ENCODE measurements at regions of chr7 and their contacts with region 1.

Region 1: GRCh38 chr7:30740424-30741181 is 11.3 kb upstream of the INMT start:
- DNase-seq: no peak
- H3K4me3 ChIP-seq: no peak overlapping the region
- H3K27me3 ChIP-seq: peaks cover 9% of the 10 kb centered on the region
- CTCF ChIP-seq: peak; percentile 99

Region 2: DNA sequence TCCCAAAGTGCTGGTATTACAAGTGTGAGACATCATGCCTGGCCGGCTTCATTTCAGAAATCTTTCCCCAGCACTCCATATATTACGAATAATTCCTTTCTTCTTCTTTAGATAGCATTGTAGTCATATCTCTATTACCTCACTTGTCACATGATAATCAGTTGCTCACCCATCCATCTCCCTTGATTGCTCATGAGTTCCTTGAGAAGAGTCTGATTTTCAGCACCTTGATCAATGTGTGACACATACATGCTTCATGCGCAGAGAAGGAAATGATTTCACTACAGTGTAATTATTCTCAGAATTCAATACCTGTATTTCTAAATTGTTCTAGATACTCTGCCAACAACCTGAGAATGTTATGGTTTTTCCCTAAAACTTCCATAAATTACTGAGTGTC is 209.3 kb before region 1 on chr7:
- CTCF ChIA-PET with region 1: no interaction called
- POLR2A ChIA-PET with region 1: no interaction called
- DNase-seq: no peak
- H3K4me3 ChIP-seq: no peak overlapping the region
- H3K27me3 ChIP-seq: no peaks in the 10 kb centered on the region
- CTCF ChIP-seq: no peak

Region 3: DNA sequence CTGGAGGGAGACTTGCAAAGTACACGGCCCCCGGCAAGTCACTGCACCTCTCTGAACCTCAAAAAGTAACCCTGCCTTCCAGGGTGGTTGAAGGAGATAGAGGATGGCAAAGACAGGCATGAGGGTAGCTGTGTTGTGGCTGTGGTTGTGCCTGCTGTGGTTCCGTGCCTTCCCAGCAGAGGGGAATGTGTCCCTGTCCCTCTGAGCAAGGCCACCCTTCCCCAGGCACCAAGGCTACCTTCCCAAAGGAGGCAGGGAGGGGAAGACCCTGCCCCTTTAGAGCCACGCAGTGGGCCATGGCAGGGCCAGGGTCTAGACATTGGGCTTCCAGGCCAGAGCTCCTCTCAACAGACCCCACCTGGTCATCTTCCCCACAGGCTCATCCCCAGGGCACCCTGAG is 77.2 kb before region 1 on chr7:
- CTCF ChIA-PET with region 1: interaction called, 10 read pairs
- POLR2A ChIA-PET with region 1: no interaction called
- DNase-seq: no peak
- H3K4me3 ChIP-seq: no peak overlapping the region
- H3K27me3 ChIP-seq: peaks cover 2% of the 10 kb centered on the region; the same call in 1 of the 2 replicates
- CTCF ChIP-seq: no peak

Region 4: DNA sequence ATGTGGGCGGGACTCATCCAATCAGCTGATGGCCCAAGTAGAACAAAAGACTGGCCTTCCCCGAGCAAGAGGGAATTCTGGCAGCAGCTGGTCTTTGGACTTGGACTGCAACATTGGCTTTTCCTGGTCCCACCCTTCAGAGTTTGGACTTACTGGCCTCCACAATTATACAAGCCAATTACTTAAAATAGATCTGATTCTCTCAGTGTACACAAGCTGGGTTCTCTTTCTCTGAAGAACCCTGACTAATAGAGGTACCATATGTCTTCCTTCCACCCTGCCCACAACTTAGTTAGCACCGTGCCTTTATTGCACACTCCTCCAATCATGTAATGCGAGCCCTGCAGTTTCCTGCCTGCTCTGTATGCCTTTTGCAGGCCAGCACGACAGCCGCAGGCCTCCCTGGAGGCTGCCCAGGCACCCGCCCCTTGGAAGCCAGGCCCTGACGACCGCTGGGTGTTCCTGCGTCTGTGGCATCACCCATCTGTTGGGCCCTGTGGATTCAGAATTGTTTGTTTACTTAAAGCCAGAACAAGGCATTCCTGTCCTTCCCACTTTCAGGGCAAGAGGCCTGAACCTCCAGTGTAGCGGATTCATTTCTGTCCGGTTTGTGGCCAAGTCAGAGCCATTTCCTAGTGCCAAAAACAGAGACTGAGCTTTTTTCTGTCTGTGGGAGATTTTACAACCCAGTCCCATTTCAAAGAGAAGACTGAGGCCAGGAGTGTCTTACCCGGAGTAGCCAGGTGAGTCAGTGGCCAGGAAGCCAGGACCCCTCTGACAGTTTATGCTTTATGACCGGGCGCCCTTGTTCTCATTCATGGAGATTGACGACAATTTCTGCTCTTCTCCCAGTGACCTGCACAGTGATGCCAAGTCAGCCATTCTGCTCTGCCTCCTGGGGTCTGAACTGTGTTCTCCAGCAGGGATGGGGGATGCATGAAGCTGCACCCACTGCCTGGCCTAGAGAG is 10.4 kb after region 1 on chr7:
- CTCF ChIA-PET with region 1: interaction called, 12 read pairs
- POLR2A ChIA-PET with region 1: no interaction called
- DNase-seq: peak; percentile 96
- H3K4me3 ChIP-seq: no peak overlapping the region
- H3K27me3 ChIP-seq: no peaks in the 10 kb centered on the region; the same call in 1 of the 2 replicates
- CTCF ChIP-seq: no peak

Region 5: GRCh38 chr7:30800785-30801252 is 60.2 kb after region 1 on chr7:
- CTCF ChIA-PET with region 1: interaction called, 10 read pairs
- POLR2A ChIA-PET with region 1: no interaction called
- DNase-seq: no peak
- H3K4me3 ChIP-seq: no peak overlapping the region
- H3K27me3 ChIP-seq: peaks cover 1% of the 10 kb centered on the region; the same call in 1 of the 2 replicates
- CTCF ChIP-seq: peak; percentile 69